Gastrocnemius medialis (tissue), 4 donors: ENCODE measurements at regions of chr5 and their contacts with region 1.

Region 1: DNA sequence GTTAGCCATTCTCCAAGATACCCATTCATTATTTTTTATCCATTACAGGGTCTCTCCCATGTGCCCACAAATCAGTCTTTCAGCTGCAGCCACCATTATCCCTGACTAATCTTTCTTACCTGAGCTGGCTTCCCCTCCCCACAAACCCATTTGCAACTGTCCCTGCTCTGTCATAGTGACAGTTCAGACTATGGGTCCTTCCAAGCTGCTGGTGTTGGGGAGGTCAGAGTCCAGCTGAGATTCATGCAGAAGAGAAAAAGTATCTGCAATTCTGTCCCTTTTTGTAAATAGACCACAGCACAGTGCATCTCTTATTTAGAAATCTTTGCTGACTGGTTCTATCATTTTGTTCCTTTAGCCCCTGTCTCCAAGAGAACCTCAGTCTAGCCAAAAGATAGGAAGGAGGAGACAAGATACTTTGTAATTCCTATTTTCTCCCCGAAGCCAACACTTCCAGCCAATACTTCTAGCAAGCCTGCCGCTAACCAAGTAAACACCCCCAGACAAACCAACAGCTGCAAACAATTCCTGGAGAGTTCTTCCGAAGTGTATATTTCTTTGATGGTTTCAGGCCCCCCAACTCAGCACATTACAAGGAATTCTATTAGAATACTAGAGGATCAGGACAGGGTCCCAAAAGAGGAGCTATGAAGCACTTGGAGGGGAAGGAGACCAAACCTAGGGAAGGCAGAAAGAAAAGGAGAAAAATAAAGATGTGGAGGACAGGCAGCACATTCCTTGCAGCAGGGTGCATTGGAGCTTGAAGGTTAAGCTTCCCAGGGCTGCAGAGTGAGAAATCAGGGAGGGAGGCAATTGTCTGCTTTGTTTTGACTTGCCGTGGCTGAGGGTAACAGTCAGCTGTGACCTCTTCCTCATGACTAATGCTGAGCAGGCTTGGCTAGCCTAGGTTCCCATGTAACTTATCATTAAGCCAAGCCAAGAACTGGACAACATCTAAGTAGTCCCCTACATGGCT is 148.5 kb downstream of the SGCD start:
- DNase-seq: peak; percentile 64 to 80
- ATAC-seq: peak; percentile 80 to 81
- H3K4me3 ChIP-seq: no peak overlapping the region
- H3K27ac ChIP-seq: peak overlapping the region; percentile 54 to 75 (median 71)
- H3K4me1 ChIP-seq: peaks cover 43 to 54% of the 10 kb centered on the region in 2 donors
- H3K27me3 ChIP-seq: no peaks in the 10 kb centered on the region
- CTCF ChIP-seq: no peak
- POLR2A ChIP-seq: no peak

Region 2: DNA sequence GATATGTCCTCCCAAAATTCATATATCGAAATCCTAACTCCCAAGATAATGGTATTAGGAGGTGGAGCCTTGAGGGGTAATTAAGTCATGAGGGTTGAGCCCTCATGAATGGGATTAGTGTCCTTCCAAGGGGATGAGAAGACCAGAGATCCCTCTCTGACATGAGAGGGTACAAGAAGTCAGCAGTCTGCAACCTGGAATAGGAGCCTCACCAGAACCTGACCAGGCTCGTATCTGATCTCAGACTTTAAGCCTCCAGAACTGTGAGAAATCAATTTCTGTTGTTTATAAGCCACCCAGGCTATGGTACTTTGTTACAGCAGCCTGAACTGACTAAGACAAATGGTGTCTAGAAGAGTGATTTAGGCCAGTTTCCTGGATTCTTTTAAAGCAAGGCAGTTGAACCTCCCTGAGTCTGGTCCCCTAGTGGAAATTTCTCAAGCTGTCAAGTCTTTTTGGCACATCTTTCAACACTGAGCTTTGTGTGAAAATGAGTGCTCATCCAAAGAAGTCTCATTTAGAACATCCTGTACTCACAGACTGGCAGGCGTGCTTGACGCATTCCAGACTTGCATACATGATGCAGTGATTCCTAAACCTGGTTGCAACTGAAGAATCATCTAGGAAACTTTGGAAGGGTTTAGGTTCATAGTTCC is 119.8 kb after region 1 on chr5:
- in situ Hi-C with region 1: no loop called
- intact Hi-C with region 1: loop called (anchors 5 kb)
- DNase-seq: peak; percentile 65 to 87
- ATAC-seq: peak; percentile 96 to 99
- H3K4me3 ChIP-seq: no peak overlapping the region
- H3K27ac ChIP-seq: peak overlapping the region; percentile 53 to 86 (median 71)
- H3K4me1 ChIP-seq: peaks cover 4 to 21% of the 10 kb centered on the region in 2 donors
- H3K27me3 ChIP-seq: no peaks in the 10 kb centered on the region
- CTCF ChIP-seq: peak in 3 of 5 experiments; percentile 29 to 42 (median 33)
- POLR2A ChIP-seq: no peak